ENCODE measurements at regions of chr13 and their contacts with region 1.

Region 1: DNA sequence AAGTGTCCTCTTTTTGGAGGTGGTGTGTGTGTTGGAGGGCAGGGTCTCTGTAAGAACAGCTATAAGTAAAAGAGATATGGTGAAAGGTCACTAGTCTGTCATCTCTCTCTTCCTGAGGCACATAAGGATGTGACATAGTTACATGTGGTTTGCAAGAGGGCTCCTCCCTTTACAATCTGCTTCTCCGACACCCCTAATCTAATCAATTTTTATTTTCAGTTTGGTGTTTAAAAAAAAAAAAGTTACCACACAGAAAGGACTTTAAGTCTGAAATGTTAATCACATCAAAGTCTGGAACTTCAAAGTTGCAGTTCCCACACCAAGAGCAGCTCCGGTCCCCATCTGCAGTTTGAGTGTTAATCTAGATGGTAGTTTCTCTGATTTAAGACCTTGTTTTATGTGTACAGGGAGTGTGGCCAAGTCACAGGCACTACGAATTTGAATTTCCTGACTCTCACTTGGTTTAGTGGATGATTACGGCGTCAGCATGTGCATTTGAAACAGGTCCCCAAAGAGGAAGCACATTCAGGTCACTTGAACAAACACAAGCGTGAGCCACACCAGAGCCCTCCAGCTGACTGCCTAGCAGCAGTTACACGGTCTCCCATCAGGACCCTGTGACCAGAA is 53.1 kb downstream of the FOXO1 start:
- DNase-seq: peak; percentile 88
- H3K4me3 Mint-ChIP-seq: peak overlapping the region; percentile 89
- H3K27ac Mint-ChIP-seq: peak overlapping the region; percentile 97
- H3K4me1 Mint-ChIP-seq: peaks cover 73% of the 10 kb centered on the region
- H3K27me3 Mint-ChIP-seq: no peaks in the 10 kb centered on the region

Region 2: DNA sequence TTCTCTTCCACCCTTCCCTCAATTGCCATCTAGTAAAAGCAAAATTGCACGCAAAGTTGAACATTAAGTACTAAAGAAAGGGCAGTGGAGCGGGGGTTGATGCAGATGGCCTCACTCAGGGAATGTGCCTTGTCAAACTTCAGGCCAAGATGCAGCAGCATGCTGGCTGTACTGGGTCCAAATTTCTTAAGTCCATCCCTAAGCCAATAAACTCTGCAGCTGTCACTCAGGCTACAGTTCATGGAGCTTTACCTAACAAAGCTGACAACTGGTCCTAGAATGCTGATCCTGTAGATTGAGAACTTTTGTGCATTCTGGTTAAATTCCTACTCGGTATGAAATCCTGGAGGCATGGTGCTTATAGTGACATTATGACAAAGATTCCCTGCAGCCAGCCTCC is 35.2 kb before region 1 on chr13:
- intact Hi-C with region 1: loop called (anchors 5 kb)
- DNase-seq: no peak
- H3K4me3 Mint-ChIP-seq: no peak overlapping the region
- H3K27ac Mint-ChIP-seq: no peak overlapping the region
- H3K4me1 Mint-ChIP-seq: peaks cover 72% of the 10 kb centered on the region
- H3K27me3 Mint-ChIP-seq: no peaks in the 10 kb centered on the region

Region 3: DNA sequence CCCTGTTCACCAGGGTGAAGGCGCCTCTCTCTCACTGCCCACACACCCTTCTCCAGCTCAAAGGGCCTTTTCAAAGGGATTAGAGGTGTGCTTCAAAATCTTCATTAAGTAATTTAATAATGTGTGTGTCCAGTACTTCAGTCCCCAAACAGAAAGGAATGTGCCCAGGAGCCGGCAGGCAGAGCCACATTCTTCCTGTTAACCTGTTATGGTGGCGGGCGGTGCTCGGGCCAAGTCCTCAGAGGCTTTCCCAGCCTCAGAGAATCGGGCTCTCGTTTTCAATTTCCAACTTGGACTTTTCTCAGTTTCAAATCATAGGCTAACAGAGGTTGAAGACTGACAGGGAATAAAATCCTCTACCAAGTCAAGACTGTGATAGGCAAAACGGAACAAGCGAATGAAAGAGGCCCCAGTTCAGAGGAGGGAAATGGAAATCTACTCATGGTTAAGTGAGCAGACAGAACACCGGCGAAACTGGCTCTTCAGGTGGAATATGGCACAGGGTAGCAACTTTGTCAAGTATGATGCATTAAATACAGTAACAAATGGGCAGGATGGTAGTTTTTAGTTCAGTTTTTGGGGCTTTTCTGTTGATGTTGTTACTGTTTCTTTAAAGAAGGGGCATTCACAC is 15.4 kb before region 1 on chr13:
- intact Hi-C with region 1: loop called (anchors 2 kb)
- DNase-seq: no peak
- H3K4me3 Mint-ChIP-seq: peak overlapping the region; percentile 6
- H3K27ac Mint-ChIP-seq: peak overlapping the region; percentile 67
- H3K4me1 Mint-ChIP-seq: peaks cover 64% of the 10 kb centered on the region
- H3K27me3 Mint-ChIP-seq: no peaks in the 10 kb centered on the region

Region 4: DNA sequence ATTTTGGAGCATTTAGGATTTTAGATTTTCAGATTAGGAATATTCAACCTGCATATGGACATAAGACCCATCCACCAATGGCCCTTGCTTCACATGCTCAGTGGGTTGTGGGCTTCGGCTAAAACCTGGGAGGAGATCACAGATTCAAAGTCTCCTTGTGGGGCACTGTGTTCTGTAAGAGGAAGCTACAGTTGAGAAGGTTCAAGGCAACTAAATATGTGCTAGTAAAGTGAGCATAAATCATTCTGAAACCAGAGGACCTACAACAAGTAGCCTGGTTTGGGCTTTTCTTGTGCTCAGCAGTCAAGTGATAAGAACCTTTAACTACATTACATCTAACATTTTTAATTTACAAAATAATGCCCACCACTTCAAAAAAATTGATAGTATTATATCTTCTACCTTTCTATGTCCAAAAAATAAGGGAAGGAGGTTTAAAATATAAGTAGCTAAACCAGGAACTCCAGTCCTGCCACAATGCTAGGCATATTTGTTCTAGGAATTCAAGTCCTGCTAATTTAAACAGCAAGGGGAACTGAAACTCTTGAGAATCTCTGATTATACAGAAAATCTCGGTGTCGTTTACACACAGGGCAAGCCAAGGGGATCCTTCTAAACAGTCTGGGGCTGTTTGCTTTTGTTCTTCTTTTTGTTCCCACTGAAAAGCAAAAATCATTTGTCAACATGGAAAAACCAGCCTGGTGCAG is 16.5 kb after region 1 on chr13:
- intact Hi-C with region 1: loop called (anchors 2 kb)
- DNase-seq: no peak
- H3K4me3 Mint-ChIP-seq: no peak overlapping the region
- H3K27ac Mint-ChIP-seq: peak overlapping the region; percentile 40
- H3K4me1 Mint-ChIP-seq: peaks cover 56% of the 10 kb centered on the region
- H3K27me3 Mint-ChIP-seq: no peaks in the 10 kb centered on the region